Right ventricle myocardium inferior (tissue), 1 donor: ENCODE measurements at regions of chr2 and their contacts with region 1.

Region 1: GRCh38 chr2:64586883-64587481 is 62.9 kb downstream of the AFTPH start:
- DNase-seq: no peak
- ATAC-seq: peak; percentile 48

Region 2: GRCh38 chr2:64288321-64289193 is 298.4 kb before region 1 on chr2:
- intact Hi-C with region 1: no loop called
- DNase-seq: no peak
- ATAC-seq: peak; percentile 49

Region 3: GRCh38 chr2:64635976-64636911 is 49.3 kb after region 1 on chr2:
- intact Hi-C with region 1: no loop called
- DNase-seq: peak; percentile 57
- ATAC-seq: no peak

Region 4: GRCh38 chr2:64865073-64865830 is 278.3 kb after region 1 on chr2:
- intact Hi-C with region 1: loop called (anchors 2 kb)
- DNase-seq: peak; percentile 86
- ATAC-seq: peak; percentile 87

Region 5: GRCh38 chr2:64873472-64873924 is 286.5 kb after region 1 on chr2:
- intact Hi-C with region 1: loop called (anchors 2 kb)
- DNase-seq: peak; percentile 91
- ATAC-seq: peak; percentile 81